ENCODE measurements at regions of chr12 and their contacts with region 1.

Region 1: DNA sequence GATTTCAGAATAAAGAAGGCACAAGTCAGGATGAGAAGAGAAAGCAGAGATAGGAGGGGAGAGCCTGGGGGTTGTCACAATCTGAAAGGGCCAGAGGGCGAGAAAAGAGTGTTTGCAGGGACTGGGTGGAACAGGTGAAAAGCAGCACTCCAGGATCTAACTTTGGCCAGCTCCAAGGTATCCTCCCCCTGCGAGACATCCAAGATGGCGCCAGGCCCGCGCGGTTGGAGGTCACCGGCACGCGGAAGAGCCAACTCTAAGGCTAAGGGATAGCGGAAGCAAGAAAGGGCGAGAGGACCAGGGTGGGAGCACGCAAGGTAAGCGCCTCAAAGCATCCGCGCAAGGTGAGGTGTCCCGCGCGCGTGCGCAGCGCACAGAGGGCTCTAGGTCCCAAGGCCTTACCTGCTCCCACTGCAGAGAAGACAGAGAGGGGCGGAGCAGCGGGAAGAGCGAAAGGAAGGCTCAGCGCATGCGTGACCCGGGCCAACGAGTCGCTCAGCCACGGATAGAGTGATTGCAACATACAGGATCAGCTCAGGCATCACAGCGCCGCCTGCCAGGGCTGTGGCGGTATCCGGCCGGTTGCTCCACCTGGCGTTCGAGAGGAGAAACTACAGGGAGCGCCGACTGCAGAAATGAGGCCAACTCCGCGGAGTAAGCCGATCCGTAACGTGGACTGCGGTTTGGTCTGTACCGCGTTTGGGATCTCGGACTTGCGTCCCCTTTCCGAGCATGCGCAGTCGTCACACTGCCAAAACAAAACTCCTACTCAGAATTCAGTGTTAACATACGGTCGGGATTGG is at the start of gene ATP5MC2:
- DNase-seq: peak; percentile 98
- H3K4me3 Mint-ChIP-seq: peak within 1 kb of the TSS; percentile 83
- H3K27ac Mint-ChIP-seq: peak within 1 kb of the TSS; percentile 80
- H3K4me1 Mint-ChIP-seq: peaks cover 10% of the 10 kb centered on the region
- H3K27me3 Mint-ChIP-seq: peaks cover 12% of the 10 kb centered on the region
- CTCF ChIP-seq: peak; percentile 97
- total RNA-seq, gene ATP5MC2: 328 and 381 TPM in 2 replicates

Region 2: GRCh38 chr12:53543539-53543938 is 132.3 kb before region 1 on chr12:
- CTCF ChIA-PET with region 1: interaction called, 16 read pairs
- POLR2A ChIA-PET with region 1: interaction called, 24 read pairs
- intact Hi-C with region 1: loop called (anchors 1 kb)
- DNase-seq: peak; percentile 73
- H3K4me3 Mint-ChIP-seq: no peak overlapping the region
- H3K27ac Mint-ChIP-seq: peak overlapping the region; percentile 57
- H3K4me1 Mint-ChIP-seq: peaks cover 19% of the 10 kb centered on the region
- H3K27me3 Mint-ChIP-seq: no peaks in the 10 kb centered on the region
- CTCF ChIP-seq: peak; percentile 76

Region 3: GRCh38 chr12:53599579-53599978 is 76.3 kb before region 1 on chr12:
- CTCF ChIA-PET with region 1: interaction called, 7 read pairs
- POLR2A ChIA-PET with region 1: interaction called, 7 read pairs
- intact Hi-C with region 1: loop called (anchors 1 kb)
- DNase-seq: no peak
- H3K4me3 Mint-ChIP-seq: no peak overlapping the region
- H3K27ac Mint-ChIP-seq: no peak overlapping the region
- H3K4me1 Mint-ChIP-seq: peaks cover 8% of the 10 kb centered on the region
- H3K27me3 Mint-ChIP-seq: no peaks in the 10 kb centered on the region
- CTCF ChIP-seq: peak; percentile 18

Region 4: GRCh38 chr12:53625946-53626701 is 49.7 kb before region 1 on chr12 and contains the start of gene ATF7:
- CTCF ChIA-PET with region 1: interaction called, 22 read pairs
- POLR2A ChIA-PET with region 1: interaction called, 88 read pairs
- intact Hi-C with region 1: loop called (anchors 2 kb)
- DNase-seq: peak; percentile 98
- H3K4me3 Mint-ChIP-seq: peak within 1 kb of the TSS; percentile 96
- H3K27ac Mint-ChIP-seq: peak within 1 kb of the TSS; percentile 89
- H3K4me1 Mint-ChIP-seq: peaks cover 18% of the 10 kb centered on the region
- H3K27me3 Mint-ChIP-seq: no peaks in the 10 kb centered on the region
- CTCF ChIP-seq: no peak
- total RNA-seq, gene ATF7: 39.6 and 40.8 TPM in 2 replicates

Region 5: DNA sequence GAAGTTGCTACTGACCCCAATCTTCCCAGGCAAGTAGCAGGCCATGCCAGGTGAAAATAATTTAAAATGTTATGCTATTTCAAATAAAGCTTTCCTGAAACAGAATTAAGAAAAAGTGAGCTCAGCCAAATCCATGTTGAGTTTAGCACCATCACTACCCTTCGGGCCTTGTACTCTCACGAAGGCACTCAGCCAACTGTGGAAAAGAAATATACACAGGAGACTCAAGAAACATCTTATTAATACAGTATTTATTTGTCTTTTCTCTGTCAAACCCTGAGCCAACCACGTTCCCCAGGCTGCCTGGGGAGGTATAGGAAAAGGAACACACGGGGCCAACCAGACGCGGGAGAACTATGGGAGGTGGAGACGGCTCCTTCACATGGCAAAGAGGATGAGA is 10.9 kb before region 1 on chr12:
- CTCF ChIA-PET with region 1: interaction called, 5 read pairs
- POLR2A ChIA-PET with region 1: interaction called, 17 read pairs
- intact Hi-C with region 1: no loop called
- DNase-seq: no peak
- H3K4me3 Mint-ChIP-seq: no peak overlapping the region
- H3K27ac Mint-ChIP-seq: no peak overlapping the region
- H3K4me1 Mint-ChIP-seq: no peaks in the 10 kb centered on the region
- H3K27me3 Mint-ChIP-seq: no peaks in the 10 kb centered on the region
- CTCF ChIP-seq: no peak

Region 6: DNA sequence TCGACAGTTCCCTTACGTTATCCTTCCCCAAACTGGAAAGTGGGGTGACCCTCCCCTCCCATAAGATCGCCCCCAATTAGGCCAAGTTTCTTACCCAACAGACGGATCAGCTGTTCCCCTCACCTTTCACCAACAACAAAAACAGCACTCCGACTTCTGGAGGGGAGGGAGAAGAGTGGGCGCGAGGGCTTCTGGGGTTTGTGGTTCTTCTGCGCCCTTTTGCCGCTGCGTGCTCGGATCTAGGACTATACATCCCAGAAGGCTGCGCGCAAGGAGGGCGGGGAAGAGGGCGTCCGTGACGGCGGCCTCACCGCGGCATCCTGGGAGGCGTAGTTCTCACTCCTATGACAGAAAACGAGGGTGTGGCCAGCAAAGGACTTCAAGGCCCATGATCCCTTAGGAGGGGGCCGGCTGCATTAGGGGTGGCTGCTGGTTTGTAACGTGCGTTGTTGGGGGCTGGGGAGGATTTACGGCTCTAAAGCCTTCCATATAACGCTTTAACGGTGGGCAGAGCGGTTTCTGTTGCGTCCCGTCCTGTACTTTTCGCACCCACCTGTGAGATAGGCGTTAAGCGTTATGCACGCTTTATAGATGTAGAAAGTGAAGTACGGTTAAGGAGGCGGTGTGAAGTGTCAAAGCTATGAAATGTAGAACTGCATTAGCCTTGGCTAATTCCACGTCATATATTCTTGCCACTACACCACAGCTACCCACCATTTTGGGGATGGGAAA is 51.6 kb after region 1 on chr12 and contains the start of gene CALCOCO1:
- CTCF ChIA-PET with region 1: interaction called, 3 read pairs
- POLR2A ChIA-PET with region 1: interaction called, 21 read pairs
- intact Hi-C with region 1: no loop called
- DNase-seq: peak; percentile 98
- H3K4me3 Mint-ChIP-seq: peak within 1 kb of the TSS; percentile 95
- H3K27ac Mint-ChIP-seq: peak within 1 kb of the TSS; percentile 99
- H3K4me1 Mint-ChIP-seq: peaks cover 15% of the 10 kb centered on the region
- H3K27me3 Mint-ChIP-seq: no peaks in the 10 kb centered on the region
- CTCF ChIP-seq: no peak
- total RNA-seq, gene CALCOCO1: 49.4 and 74.6 TPM in 2 replicates

Measured in MCF 10A (cell line).